ENCODE measurements at regions of chr10 and their contacts with region 1.

Region 1: DNA sequence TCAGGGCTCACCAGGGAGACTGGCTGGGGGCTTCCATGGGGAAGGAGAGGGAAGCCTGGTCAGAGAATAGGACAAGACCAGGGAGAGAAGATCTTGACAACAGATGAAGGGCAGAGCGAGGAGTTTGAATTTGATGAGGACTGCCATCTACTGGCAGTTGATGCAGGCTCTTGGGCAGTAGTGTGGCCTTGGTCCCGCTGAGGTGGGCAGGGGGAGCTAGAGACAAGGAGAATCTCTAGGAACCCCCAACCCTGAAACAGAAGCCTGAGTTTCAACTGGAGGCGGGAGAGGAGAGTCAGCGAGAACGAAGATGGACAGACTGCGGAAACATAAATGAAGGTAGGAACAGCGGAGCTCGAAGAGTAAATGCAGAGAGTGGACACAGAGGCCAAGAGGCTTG is 81.0 kb downstream of the PPP1R3C start:
- DNase-seq: peak; percentile 80
- ATAC-seq: peak; percentile 93
- H3K4me3 ChIP-seq: no peak overlapping the region
- H3K27ac ChIP-seq: no peak overlapping the region
- H3K4me1 ChIP-seq: no peaks in the 10 kb centered on the region
- H3K27me3 ChIP-seq: no peaks in the 10 kb centered on the region
- CTCF ChIP-seq: peak; percentile 98
- POLR2A ChIP-seq: no peak
- RAD21 ChIP-seq: peak; percentile 83

Region 2: GRCh38 chr10:91389636-91390512 is 162.0 kb before region 1 on chr10:
- CTCF ChIA-PET with region 1: interaction called, 4 read pairs
- POLR2A ChIA-PET with region 1: no interaction called
- dilution Hi-C with region 1: no loop called
- in situ Hi-C with region 1: no loop called
- intact Hi-C with region 1: loop called (anchors 1 kb)
- DNase-seq: peak; percentile 71
- ATAC-seq: peak; percentile 79
- H3K4me3 ChIP-seq: peak overlapping the region; percentile 37; the same call in 1 of the 2 replicates
- H3K27ac ChIP-seq: peak overlapping the region; percentile 37; the same call in 1 of the 2 replicates
- H3K4me1 ChIP-seq: peaks cover 3% of the 10 kb centered on the region; the same call in 1 of the 2 replicates
- H3K27me3 ChIP-seq: peaks cover 21% of the 10 kb centered on the region
- CTCF ChIP-seq: peak; percentile 64
- POLR2A ChIP-seq: no peak
- RAD21 ChIP-seq: peak; percentile 65

Region 3: GRCh38 chr10:91409869-91410637 is 141.8 kb before region 1 on chr10 and contains the start of gene HECTD2:
- CTCF ChIA-PET with region 1: interaction called, 7 read pairs
- POLR2A ChIA-PET with region 1: no interaction called
- dilution Hi-C with region 1: no loop called
- in situ Hi-C with region 1: no loop called
- intact Hi-C with region 1: loop called (anchors 5 kb)
- DNase-seq: peak; percentile 65
- ATAC-seq: peak; percentile 80
- H3K4me3 ChIP-seq: peak within 1 kb of the TSS; percentile 83
- H3K27ac ChIP-seq: peak within 1 kb of the TSS; percentile 98
- H3K4me1 ChIP-seq: no peaks in the 10 kb centered on the region
- H3K27me3 ChIP-seq: no peaks in the 10 kb centered on the region
- CTCF ChIP-seq: peak; percentile 57
- POLR2A ChIP-seq: peak; percentile 64; the same call in 1 of the 2 replicates
- RAD21 ChIP-seq: peak; percentile 27
- total RNA-seq, gene HECTD2: 5.9 and 10.3 TPM in 2 replicates

Region 4: DNA sequence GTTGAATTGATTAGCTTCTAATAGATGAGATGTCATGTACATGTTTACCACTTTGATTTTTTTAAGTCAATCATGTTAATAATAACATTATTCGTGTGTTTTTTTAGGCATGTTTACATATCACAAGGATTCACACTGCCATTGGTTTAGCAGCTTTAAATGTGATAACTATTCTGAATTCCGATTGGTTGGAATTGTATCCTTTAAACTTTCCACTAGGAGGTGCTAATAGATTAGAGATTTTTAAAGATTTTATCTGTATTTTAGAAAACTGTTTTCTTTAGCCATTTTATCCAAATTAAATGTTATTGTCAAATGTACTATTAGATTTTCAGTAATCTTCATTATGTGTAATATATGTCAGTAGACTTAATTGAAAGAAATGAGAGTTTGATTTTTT is 58.5 kb before region 1 on chr10:
- CTCF ChIA-PET with region 1: interaction called, 9 read pairs
- POLR2A ChIA-PET with region 1: no interaction called
- dilution Hi-C with region 1: no loop called
- in situ Hi-C with region 1: no loop called
- intact Hi-C with region 1: loop called (anchors 5 kb)
- DNase-seq: peak; percentile 63
- ATAC-seq: no peak
- H3K4me3 ChIP-seq: no peak overlapping the region
- H3K27ac ChIP-seq: no peak overlapping the region
- H3K4me1 ChIP-seq: peaks cover 3% of the 10 kb centered on the region; the same call in 1 of the 2 replicates
- H3K27me3 ChIP-seq: no peaks in the 10 kb centered on the region
- CTCF ChIP-seq: peak; percentile 57
- POLR2A ChIP-seq: no peak
- RAD21 ChIP-seq: peak; percentile 54

Region 5: DNA sequence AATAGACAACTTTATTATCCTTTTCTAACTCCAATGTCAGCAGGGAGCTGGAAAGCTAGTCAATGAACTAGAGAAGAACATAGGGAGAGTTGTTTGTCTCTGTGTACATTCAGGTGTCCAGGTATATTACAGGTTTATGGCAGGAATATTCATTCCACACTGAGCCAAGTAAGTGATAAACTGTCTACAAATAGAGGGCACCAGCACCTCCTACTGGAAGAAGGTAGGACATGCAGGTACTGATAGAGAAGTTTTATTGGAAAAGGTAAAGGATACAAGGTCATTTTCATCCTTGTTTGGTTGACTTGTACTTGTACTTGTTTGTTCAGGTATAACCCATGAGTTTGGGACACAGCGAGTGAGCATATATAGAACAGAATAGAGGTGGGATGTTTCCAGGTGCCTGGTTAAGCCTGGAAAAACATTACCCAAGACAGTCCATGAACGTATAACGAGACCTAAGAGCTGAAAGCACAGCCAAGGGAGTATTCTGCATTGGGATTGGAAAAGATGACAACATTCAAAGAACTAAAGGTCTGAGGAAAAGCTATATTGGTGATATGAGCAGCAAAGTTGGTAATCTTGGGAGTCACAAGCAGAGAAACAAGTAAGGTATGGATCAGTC is 142.4 kb after region 1 on chr10:
- CTCF ChIA-PET with region 1: interaction called, 5 read pairs
- POLR2A ChIA-PET with region 1: no interaction called
- dilution Hi-C with region 1: no loop called
- in situ Hi-C with region 1: loop called (anchors 10 kb)
- intact Hi-C with region 1: loop called (anchors 2 kb)
- DNase-seq: peak; percentile 51
- ATAC-seq: peak; percentile 81
- H3K4me3 ChIP-seq: no peak overlapping the region
- H3K27ac ChIP-seq: no peak overlapping the region
- H3K4me1 ChIP-seq: peaks cover 8% of the 10 kb centered on the region
- H3K27me3 ChIP-seq: no peaks in the 10 kb centered on the region
- CTCF ChIP-seq: peak; percentile 82
- POLR2A ChIP-seq: no peak
- RAD21 ChIP-seq: peak; percentile 86

Region 6: GRCh38 chr10:92342796-92343195 is 790.9 kb after region 1 on chr10:
- CTCF ChIA-PET with region 1: no interaction called
- POLR2A ChIA-PET with region 1: no interaction called
- dilution Hi-C with region 1: no loop called
- in situ Hi-C with region 1: no loop called
- intact Hi-C with region 1: no loop called
- DNase-seq: peak; percentile 61
- ATAC-seq: peak; percentile 68
- H3K4me3 ChIP-seq: no peak overlapping the region
- H3K27ac ChIP-seq: no peak overlapping the region
- H3K4me1 ChIP-seq: peaks cover 4% of the 10 kb centered on the region; the same call in 1 of the 2 replicates
- H3K27me3 ChIP-seq: no peaks in the 10 kb centered on the region
- CTCF ChIP-seq: no peak
- POLR2A ChIP-seq: no peak
- RAD21 ChIP-seq: no peak

Measured in IMR-90 (cell line).